ENCODE measurements at regions of chr15 and their contacts with region 1.

Region 1: DNA sequence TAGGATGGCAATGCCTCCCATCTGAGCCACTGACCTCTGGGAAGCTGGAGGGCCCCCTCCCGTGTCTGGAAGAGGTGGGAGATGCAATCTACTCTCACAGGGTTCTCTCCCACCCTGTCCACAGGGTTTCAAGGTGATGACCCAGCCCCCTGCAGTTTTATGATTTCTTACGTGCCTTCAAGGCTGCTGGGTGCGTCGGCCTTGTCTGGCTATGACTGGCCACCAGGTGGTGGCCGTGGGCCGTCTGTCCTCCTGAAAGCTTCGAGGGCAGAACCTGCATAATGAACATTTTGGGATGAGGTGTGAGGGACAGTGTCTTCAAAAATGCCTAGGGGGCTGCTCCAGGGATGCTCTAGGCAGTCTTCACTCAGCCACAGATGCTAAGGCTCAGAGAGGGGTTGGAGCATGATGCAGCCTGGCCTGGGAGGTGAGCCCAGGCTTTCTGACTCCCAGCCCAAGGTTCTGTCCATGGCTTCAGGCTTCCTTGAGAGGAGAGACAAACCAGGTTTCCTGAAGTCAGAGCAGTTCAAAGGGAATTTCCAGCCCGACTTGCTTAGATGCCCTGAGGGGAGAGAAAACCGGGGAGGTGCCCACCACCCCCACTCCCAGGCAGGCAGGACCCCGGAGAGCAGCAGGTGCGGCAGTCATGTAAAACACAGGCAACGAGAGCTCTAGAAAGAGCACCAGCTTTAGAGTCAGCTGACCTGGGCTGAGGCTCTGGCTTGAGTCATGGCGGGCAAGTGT is 18.7 kb downstream of the ISG20 start:
- DNase-seq: peak; percentile 61
- ATAC-seq: peak; percentile 74
- H3K4me3 ChIP-seq: no peak overlapping the region
- H3K27ac ChIP-seq: no peak overlapping the region
- H3K4me1 ChIP-seq: peaks cover 13% of the 10 kb centered on the region
- H3K27me3 ChIP-seq: no peaks in the 10 kb centered on the region
- CTCF ChIP-seq: peak; percentile 84
- POLR2A ChIP-seq: no peak
- RAD21 ChIP-seq: peak; percentile 93

Region 2: GRCh38 chr15:88538972-88539840 is 118.3 kb before region 1 on chr15:
- CTCF ChIA-PET with region 1: no interaction called
- POLR2A ChIA-PET with region 1: no interaction called
- dilution Hi-C with region 1: no loop called
- in situ Hi-C with region 1: no loop called
- intact Hi-C with region 1: no loop called
- DNase-seq: peak; percentile 22
- ATAC-seq: no peak
- H3K4me3 ChIP-seq: no peak overlapping the region
- H3K27ac ChIP-seq: no peak overlapping the region
- H3K4me1 ChIP-seq: peaks cover 4% of the 10 kb centered on the region
- H3K27me3 ChIP-seq: no peaks in the 10 kb centered on the region
- CTCF ChIP-seq: no peak
- POLR2A ChIP-seq: no peak
- RAD21 ChIP-seq: no peak

Region 3: DNA sequence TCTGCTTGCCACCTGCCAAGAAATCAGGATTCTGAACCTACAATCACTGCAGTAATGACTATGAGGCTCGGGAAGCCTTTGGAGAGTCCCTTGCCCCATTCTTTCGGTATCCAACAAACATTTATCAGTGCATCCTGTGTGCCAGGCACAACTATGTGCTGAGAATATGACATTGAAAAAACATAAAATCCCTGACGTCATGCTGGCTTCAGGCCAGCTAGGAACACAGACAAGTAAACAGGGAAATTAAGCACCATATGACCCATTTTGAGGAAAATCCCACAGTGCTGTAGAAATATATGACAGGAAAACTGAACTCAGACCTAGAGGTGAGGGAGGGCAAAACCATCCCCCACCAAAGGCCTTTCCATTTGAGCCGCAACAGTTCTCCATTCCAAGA is 77.0 kb before region 1 on chr15:
- CTCF ChIA-PET with region 1: no interaction called
- POLR2A ChIA-PET with region 1: no interaction called
- dilution Hi-C with region 1: no loop called
- in situ Hi-C with region 1: no loop called
- intact Hi-C with region 1: no loop called
- DNase-seq: no peak
- ATAC-seq: no peak
- H3K4me3 ChIP-seq: no peak overlapping the region
- H3K27ac ChIP-seq: no peak overlapping the region
- H3K4me1 ChIP-seq: no peaks in the 10 kb centered on the region
- H3K27me3 ChIP-seq: no peaks in the 10 kb centered on the region
- CTCF ChIP-seq: no peak
- POLR2A ChIP-seq: no peak
- RAD21 ChIP-seq: no peak

Region 4: DNA sequence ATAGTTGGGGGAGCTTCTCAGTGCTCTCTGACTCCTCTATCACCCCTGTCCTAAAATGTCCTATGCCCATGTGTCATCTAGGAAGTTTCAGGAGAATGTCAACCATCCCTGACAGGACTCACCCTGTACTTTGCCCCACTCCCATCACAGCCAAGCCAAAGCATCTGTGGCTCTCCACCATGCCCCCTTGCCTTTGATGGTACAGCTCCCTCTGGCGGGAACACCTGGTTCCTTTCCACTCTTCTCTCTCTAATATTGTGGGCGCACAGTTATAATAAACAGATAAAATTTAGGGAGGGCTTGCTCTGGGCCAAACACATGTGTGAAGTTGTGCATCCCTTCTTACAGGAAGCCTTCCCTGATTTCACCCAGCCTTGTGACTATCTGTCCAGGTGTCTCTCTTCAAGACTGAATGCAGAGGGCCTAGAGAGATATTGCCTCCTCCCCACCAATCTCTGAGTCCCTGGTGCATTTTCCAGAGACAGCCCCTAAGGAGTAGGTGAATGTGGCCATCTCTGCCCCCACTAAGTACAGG is 44.1 kb after region 1 on chr15:
- CTCF ChIA-PET with region 1: no interaction called
- POLR2A ChIA-PET with region 1: no interaction called
- dilution Hi-C with region 1: no loop called
- in situ Hi-C with region 1: no loop called
- intact Hi-C with region 1: loop called (anchors 1 kb)
- DNase-seq: no peak
- ATAC-seq: 0 out of 2 replicates have a peak, but pooled peaks have one; percentile 44
- H3K4me3 ChIP-seq: no peak overlapping the region
- H3K27ac ChIP-seq: no peak overlapping the region
- H3K4me1 ChIP-seq: peaks cover 2% of the 10 kb centered on the region; the same call in 1 of the 2 replicates
- H3K27me3 ChIP-seq: peaks cover 32% of the 10 kb centered on the region
- CTCF ChIP-seq: peak; percentile 43
- POLR2A ChIP-seq: no peak
- RAD21 ChIP-seq: peak; percentile 48

Region 5: GRCh38 chr15:88834211-88834812 is 176.8 kb after region 1 on chr15:
- CTCF ChIA-PET with region 1: interaction called, 16 read pairs
- POLR2A ChIA-PET with region 1: no interaction called
- dilution Hi-C with region 1: no loop called
- in situ Hi-C with region 1: loop called (anchors 25 kb)
- intact Hi-C with region 1: loop called (anchors 1 kb)
- DNase-seq: peak; percentile 63
- ATAC-seq: peak; percentile 83
- H3K4me3 ChIP-seq: no peak overlapping the region
- H3K27ac ChIP-seq: no peak overlapping the region
- H3K4me1 ChIP-seq: peaks cover 5% of the 10 kb centered on the region; the same call in 1 of the 2 replicates
- H3K27me3 ChIP-seq: no peaks in the 10 kb centered on the region
- CTCF ChIP-seq: peak; percentile 69
- POLR2A ChIP-seq: no peak
- RAD21 ChIP-seq: peak; percentile 76

Region 6: DNA sequence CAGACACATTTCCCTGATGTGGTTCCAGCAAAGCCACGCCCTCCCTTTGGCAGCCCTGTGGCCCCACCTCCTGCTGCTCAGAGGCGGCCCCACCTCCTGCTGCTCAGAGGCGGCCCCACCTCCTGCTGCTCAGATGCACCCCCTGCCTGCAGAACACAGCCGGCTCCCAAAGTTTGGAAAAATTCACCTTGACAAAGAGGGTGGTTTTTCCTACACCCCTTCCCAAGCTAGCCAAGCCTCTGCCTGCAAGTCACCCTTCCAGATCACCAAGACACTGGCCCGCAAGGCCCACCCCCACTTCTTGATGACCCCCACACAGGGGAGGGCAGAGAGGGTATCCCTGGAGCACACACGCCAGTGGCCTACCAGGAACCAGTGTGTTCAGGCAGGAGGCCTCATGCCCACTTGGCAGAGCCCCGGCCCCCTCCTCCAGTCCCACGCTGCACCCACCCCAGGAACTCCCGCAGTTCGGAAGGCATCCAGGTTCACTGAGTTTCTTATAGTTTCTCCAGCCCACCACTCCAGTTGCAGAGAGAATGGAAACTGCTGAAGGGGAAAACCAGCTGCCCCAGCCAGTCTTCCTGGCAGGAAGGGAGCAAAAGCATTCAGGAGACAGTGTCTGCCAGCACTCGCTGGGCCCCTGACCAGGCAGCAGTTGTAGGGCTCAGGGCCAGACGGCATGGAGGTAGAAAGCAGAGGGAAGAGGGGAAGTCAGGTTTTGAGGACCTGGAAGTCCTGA is 240.1 kb after region 1 on chr15:
- CTCF ChIA-PET with region 1: no interaction called
- POLR2A ChIA-PET with region 1: no interaction called
- dilution Hi-C with region 1: no loop called
- in situ Hi-C with region 1: no loop called
- intact Hi-C with region 1: loop called (anchors 1 kb)
- DNase-seq: peak; percentile 71
- ATAC-seq: peak; percentile 89
- H3K4me3 ChIP-seq: no peak overlapping the region
- H3K27ac ChIP-seq: no peak overlapping the region
- H3K4me1 ChIP-seq: peaks cover 14% of the 10 kb centered on the region
- H3K27me3 ChIP-seq: no peaks in the 10 kb centered on the region
- CTCF ChIP-seq: peak; percentile 68
- POLR2A ChIP-seq: no peak
- RAD21 ChIP-seq: peak; percentile 47

Region 7: DNA sequence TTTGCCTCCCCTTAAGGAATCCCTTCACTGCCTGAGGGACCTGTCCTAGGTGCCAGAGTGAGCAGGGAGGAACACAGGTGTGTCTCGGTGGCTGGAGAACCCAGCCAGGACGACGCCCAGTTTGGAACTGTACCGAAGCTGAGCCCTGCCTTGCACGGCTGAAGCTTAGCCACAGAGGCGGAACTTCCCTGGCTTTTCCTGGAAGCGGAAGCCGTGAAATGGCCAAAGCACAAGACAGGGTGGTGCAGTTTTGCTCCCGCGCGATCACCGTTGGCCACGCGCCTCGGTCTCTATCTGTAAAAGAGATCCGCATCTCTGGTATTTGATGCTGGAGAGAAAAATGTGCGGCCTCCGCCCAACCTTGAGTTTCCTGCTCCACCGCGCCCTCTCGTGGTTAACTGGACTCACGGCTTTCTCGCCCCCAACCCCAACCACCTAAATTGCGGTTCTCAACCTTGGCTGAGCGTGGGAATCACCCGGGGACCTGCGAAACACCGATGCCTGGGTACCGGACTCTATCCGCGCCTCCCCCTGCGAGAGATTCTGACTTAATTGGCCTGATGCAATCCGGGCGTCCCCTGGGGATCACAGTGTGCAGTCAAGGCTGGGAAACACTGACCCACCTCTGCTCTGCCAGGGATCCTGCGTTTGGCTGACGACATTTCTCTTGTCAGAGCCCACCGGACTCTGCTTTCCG is 360.0 kb after region 1 on chr15:
- CTCF ChIA-PET with region 1: no interaction called
- POLR2A ChIA-PET with region 1: no interaction called
- dilution Hi-C with region 1: no loop called
- in situ Hi-C with region 1: no loop called
- intact Hi-C with region 1: loop called (anchors 5 kb)
- DNase-seq: peak; percentile 71
- ATAC-seq: peak; percentile 92
- H3K4me3 ChIP-seq: peak overlapping the region; percentile 22
- H3K27ac ChIP-seq: peak overlapping the region; percentile 6; the same call in 1 of the 2 replicates
- H3K4me1 ChIP-seq: peaks cover 9% of the 10 kb centered on the region
- H3K27me3 ChIP-seq: no peaks in the 10 kb centered on the region
- CTCF ChIP-seq: peak; percentile 88
- POLR2A ChIP-seq: no peak
- RAD21 ChIP-seq: peak; percentile 88

Region 8: DNA sequence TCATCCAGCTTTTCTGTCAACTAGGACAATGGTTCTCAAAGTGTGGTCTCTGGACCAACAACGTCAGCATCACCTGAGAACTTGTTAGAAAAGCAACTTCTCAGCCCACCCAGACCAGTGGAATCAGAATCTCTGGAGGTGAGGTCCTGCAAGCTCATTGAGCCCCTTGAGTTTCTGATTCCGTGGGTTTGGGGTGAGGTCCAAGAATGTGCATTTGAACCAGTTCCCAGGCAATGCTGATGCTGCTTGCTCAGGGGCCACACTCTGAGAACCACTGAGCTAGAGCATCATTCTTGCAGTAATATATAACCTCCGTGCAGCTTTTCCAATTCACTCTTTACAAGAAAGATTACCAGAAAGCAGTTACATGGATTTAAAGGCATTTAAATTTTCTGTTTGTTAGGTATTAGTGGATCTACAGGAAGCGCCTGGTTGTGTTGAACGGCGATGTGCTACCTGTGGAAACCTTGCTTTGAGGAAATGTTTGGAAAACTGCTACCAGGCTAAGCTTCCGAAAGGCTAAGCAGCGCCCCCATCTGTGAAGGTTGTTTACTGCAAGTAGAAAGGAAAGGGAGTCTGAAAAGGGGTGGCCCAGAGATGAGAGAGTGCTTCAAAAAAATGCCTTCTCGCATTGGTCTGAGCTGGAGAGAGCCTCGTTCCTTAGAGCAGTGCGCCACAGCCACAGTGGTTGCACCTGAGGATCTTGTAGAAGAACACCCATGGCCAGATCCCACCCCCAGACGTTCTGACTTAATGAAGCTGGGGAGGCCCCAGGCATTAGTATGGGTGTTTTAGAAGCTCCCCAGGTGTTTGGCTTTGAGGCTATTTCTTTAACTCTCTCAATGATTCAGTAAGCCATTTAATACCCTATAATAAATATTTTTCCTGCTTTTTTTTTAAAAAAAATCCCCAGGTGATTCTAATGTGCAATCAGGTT is 513.9 kb after region 1 on chr15:
- CTCF ChIA-PET with region 1: no interaction called
- POLR2A ChIA-PET with region 1: no interaction called
- dilution Hi-C with region 1: no loop called
- in situ Hi-C with region 1: loop called (anchors 25 kb)
- intact Hi-C with region 1: no loop called
- DNase-seq: peak; percentile 36
- ATAC-seq: peak; percentile 50
- H3K4me3 ChIP-seq: no peak overlapping the region
- H3K27ac ChIP-seq: no peak overlapping the region
- H3K4me1 ChIP-seq: peaks cover 12% of the 10 kb centered on the region
- H3K27me3 ChIP-seq: no peaks in the 10 kb centered on the region
- CTCF ChIP-seq: peak; percentile 63
- POLR2A ChIP-seq: no peak
- RAD21 ChIP-seq: peak; percentile 70